GM12878 (cell line): ENCODE measurements at regions of chr4 and their contacts with region 1.

Region 1: DNA sequence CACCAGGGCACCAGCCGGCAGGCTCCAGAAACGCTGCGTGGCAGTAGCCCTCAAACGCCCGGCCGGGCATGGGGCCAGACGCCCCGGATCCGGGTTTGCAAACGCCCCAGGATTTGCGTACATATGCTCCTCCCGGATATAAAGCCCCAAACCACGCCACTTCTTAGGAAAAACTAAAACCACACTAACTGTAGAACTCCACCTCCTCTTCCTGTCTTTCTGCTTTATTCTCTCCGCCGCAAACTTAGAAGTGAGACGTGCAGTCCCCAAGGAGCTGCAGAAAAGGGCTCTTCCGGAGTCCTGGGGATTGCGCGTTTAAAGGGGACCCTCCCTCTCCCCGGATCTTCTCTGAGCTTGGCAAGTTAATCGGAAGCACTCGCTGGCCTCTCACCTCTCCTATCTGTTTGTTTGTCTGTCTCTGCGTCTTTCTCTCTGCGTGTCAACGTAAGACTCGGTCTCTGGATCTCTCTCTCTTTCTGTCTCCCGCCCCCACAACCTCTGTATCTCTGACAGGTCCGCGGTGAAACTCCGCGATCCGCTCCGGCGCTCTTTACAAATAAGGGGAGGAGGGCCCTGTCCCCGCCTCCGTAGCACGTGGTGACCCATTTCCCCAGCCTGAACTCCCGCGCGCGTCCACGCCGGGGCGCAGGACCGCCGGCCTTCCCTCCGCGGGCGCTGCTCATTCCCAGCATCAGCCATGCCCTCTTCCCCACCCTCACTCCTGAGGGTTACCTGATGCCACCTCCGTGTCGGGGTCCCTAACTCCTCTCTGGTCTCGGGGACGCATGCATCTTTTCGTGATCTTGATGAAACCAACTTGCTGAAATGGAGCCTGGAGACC is at the start of gene SLC39A8:
- DNase-seq: peak; percentile 91
- ATAC-seq: peak; percentile 87
- H3K4me3 ChIP-seq: peak within 1 kb of the TSS; percentile 72
- H3K27ac ChIP-seq: peak within 1 kb of the TSS; percentile 87
- H3K4me1 ChIP-seq: peaks cover 11% of the 10 kb centered on the region
- H3K27me3 ChIP-seq: no peaks in the 10 kb centered on the region
- CTCF ChIP-seq: peak; percentile 84 to 87 (median 86)
- EP300 ChIP-seq: peak; percentile 42 to 69; a peak in 3 of 4 replicates
- POLR2A ChIP-seq: peak; percentile 66
- RAD21 ChIP-seq: peak; percentile 54
- polyA plus RNA-seq, gene SLC39A8: 7.9 to 16.6 TPM

Region 2: GRCh38 chr4:102321260-102321995 is 23.7 kb before region 1 on chr4:
- CTCF ChIA-PET with region 1: interaction called, 17 read pairs
- POLR2A ChIA-PET with region 1: interaction called, 10 read pairs
- RAD21 ChIA-PET with region 1: interaction called, 26 read pairs
- SMC1A ChIA-PET with region 1: interaction called, 12 read pairs
- in situ Hi-C with region 1: no loop called
- intact Hi-C with region 1: loop called (anchors 1 kb)
- DNase-seq: peak; percentile 63
- ATAC-seq: peak; percentile 87
- H3K4me3 ChIP-seq: peak overlapping the region; percentile 23; the same call in 1 of the 2 replicates
- H3K27ac ChIP-seq: peak overlapping the region; percentile 62
- H3K4me1 ChIP-seq: peaks cover 6% of the 10 kb centered on the region
- H3K27me3 ChIP-seq: no peaks in the 10 kb centered on the region
- CTCF ChIP-seq: no peak
- EP300 ChIP-seq: peak in 1 of 2 experiments; percentile 52; a peak in 1 of 4 replicates
- POLR2A ChIP-seq: no peak
- RAD21 ChIP-seq: no peak

Region 3: DNA sequence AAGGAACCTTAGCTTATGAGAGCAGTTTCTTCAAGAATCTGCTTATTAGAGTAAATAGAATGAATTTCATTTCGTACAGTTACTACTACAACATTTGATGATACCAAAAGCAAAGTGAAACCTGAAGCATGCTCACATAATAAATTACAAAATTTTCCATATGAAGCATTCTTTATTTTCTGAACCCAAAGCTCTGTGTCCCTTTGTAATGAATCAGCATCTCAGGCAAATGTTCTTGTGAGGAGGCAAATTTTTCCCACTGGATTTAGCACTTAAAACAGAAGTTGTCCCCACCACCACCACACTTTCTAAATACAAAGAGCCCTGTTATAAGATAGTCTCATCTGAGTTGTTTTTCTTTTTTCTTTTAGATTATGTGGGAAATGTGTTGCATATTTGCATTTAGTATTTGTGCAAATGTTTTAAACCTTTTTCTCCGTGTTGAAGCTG is 85.3 kb after region 1 on chr4:
- CTCF ChIA-PET with region 1: interaction called, 40 read pairs
- POLR2A ChIA-PET with region 1: interaction called, 9 read pairs
- RAD21 ChIA-PET with region 1: interaction called, 41 read pairs
- SMC1A ChIA-PET with region 1: interaction called, 32 read pairs
- in situ Hi-C with region 1: loop called (anchors 5 kb)
- intact Hi-C with region 1: loop called (anchors 1 kb)
- DNase-seq: no peak
- ATAC-seq: peak; percentile 38
- H3K4me3 ChIP-seq: peak overlapping the region; percentile 83
- H3K27ac ChIP-seq: peak overlapping the region; percentile 61
- H3K4me1 ChIP-seq: no peaks in the 10 kb centered on the region
- H3K27me3 ChIP-seq: no peaks in the 10 kb centered on the region
- CTCF ChIP-seq: no peak
- EP300 ChIP-seq: no peak
- POLR2A ChIP-seq: no peak
- RAD21 ChIP-seq: no peak

Region 4: DNA sequence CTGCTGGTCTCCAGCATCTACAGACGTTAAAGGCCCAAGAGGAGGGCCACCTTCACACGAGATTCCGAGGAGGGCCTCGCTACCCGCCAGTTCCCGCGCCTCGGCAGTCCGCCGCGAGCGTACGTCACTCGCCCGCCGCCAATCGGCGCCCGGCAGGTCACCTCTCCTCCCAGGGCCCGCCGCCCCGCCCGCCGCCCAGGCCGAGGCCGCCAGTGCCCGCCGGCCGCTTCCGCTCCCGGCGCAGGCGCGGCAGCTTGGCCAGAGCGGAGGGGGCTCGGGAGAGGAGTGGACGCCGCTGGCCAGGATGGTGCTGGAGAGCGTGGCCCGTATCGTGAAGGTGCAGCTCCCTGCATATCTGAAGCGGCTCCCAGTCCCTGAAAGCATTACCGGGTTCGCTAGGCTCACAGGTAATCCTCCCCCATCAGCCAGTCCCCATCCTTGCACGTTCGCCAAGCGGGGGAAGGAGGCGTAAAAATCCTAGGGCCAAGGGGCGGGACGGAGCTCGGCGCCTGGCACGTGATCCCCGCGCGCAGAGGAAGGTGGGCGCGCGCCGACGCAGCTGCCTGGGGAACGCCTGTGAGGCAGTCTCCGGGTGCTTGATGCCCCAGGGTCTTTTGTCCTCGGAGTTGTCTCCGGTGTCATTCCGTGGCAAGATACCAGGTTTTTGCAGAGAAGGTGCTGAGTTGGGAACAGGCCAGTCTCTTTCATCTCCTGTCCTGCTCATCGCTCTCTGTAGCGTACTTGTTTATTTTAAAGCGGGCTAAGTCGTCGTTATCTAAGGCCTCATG is 523.8 kb after region 1 on chr4 and contains the start of gene CISD2:
- CTCF ChIA-PET with region 1: no interaction called
- POLR2A ChIA-PET with region 1: no interaction called
- RAD21 ChIA-PET with region 1: no interaction called
- SMC1A ChIA-PET with region 1: no interaction called
- in situ Hi-C with region 1: no loop called
- intact Hi-C with region 1: loop called (anchors 10 kb)
- DNase-seq: peak; percentile 80
- ATAC-seq: peak; percentile 87
- H3K4me3 ChIP-seq: peak within 1 kb of the TSS; percentile 86
- H3K27ac ChIP-seq: peak within 1 kb of the TSS; percentile 98
- H3K4me1 ChIP-seq: peaks cover 5% of the 10 kb centered on the region; the same call in 1 of the 2 replicates
- H3K27me3 ChIP-seq: no peaks in the 10 kb centered on the region
- CTCF ChIP-seq: no peak
- EP300 ChIP-seq: 0 out of 4 replicates have a peak, but pooled peaks of 1 of the 2 experiments have one; percentile 18
- POLR2A ChIP-seq: peak; percentile 94
- RAD21 ChIP-seq: no peak
- polyA plus RNA-seq, gene CISD2: 52.3 to 55.9 TPM